OCI-LY7 (cell line): ENCODE measurements at regions of chr9 and their contacts with region 1.

Region 1: GRCh38 chr9:15606643-15607472 is 54.0 kb downstream of the CCDC171 start:
- DNase-seq: peak; percentile 70
- H3K4me3 ChIP-seq: no peak overlapping the region
- H3K27ac ChIP-seq: no peak overlapping the region
- H3K4me1 ChIP-seq: peaks cover 5% of the 10 kb centered on the region
- CTCF ChIP-seq: peak; percentile 95

Region 2: DNA sequence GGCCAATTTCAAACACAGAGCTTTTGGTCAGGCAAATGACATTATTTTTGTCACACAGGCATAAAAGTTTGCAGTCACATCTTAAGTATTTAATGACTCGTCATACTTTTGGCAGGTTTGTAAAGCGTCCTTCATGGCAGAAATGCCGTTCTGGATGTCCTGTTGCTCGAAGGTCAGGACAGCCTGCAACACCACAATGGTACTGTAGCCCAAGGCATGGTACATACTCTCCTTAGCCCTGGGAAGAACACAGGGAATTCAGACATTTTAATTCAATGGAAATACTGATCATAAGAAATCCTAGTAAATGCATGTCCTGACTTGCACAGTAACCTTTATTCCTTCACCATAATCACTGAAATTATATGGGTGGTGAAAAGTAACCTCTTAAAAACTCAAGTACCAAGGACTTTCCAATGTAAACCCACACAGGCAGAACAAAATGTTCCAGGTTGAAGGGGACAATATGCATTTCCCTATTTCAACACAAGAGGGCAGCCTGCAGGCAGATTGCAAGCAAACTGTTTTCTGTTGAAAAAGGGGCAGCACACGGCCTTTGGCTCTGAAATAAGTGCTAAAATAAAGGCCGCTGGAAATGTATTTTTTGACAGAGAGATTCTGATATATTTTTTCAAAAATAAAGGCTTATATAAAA is 395.6 kb before region 1 on chr9:
- CTCF ChIA-PET with region 1: no interaction called
- POLR2A ChIA-PET with region 1: no interaction called
- intact Hi-C with region 1: loop called (anchors 2 kb)
- DNase-seq: peak; percentile 65
- H3K4me3 ChIP-seq: no peak overlapping the region
- H3K27ac ChIP-seq: no peak overlapping the region
- H3K4me1 ChIP-seq: no peaks in the 10 kb centered on the region
- CTCF ChIP-seq: peak; percentile 96

Region 3: DNA sequence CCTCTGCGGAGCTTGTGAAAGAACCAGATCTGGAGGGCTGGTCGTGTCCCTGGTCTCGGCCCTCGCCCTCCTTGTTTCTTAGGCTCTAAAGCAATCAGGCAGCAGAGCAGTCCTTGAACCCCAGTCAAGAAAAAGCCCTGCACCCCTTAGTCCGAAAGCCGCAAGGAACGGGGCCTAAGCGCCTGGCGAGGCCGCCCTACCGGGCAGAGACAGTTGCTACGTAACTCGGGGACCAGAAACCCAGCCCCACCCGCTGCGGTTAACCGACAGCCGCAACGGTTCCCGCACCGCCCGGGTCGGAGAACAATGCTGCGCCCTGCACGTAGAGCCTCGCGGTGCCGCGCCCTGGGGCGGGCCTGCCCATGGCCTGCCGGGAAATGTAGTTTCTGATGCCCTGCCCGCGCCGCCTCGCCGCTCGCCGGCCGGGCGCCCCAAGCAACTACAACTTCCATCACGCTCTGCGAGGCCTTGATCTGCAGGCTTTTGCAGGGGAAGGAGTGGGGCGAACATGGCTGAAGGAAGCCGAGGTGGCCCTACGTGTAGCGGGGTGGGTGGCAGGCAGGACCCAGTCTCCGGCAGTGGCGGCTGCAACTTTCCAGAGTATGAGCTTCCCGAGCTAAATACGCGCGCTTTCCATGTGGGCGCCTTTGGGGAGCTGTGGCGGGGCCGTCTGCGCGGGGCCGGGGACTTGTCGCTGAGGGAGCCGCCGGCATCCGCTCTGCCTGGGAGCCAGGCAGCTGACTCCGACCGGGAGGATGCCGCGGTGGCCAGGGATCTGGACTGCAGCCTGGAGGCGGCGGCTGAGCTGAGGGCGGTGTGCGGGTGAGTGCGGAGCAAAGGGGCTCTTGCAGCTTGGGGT is 184.3 kb before region 1 on chr9 and contains the start of gene SNAPC3:
- CTCF ChIA-PET with region 1: no interaction called
- POLR2A ChIA-PET with region 1: no interaction called
- intact Hi-C with region 1: loop called (anchors 5 kb)
- DNase-seq: peak; percentile 95
- H3K4me3 ChIP-seq: peak within 1 kb of the TSS; percentile 90
- H3K27ac ChIP-seq: peak within 1 kb of the TSS; percentile 68
- H3K4me1 ChIP-seq: peaks cover 40% of the 10 kb centered on the region
- CTCF ChIP-seq: no peak
- total RNA-seq, gene SNAPC3: 54.2 and 66.1 TPM in 2 replicates

Region 4: GRCh38 chr9:15475923-15476536 is 130.8 kb before region 1 on chr9:
- CTCF ChIA-PET with region 1: no interaction called
- POLR2A ChIA-PET with region 1: no interaction called
- intact Hi-C with region 1: loop called (anchors 5 kb)
- DNase-seq: no peak
- H3K4me3 ChIP-seq: no peak overlapping the region
- H3K27ac ChIP-seq: no peak overlapping the region
- H3K4me1 ChIP-seq: peaks cover 17% of the 10 kb centered on the region
- CTCF ChIP-seq: no peak

Region 5: DNA sequence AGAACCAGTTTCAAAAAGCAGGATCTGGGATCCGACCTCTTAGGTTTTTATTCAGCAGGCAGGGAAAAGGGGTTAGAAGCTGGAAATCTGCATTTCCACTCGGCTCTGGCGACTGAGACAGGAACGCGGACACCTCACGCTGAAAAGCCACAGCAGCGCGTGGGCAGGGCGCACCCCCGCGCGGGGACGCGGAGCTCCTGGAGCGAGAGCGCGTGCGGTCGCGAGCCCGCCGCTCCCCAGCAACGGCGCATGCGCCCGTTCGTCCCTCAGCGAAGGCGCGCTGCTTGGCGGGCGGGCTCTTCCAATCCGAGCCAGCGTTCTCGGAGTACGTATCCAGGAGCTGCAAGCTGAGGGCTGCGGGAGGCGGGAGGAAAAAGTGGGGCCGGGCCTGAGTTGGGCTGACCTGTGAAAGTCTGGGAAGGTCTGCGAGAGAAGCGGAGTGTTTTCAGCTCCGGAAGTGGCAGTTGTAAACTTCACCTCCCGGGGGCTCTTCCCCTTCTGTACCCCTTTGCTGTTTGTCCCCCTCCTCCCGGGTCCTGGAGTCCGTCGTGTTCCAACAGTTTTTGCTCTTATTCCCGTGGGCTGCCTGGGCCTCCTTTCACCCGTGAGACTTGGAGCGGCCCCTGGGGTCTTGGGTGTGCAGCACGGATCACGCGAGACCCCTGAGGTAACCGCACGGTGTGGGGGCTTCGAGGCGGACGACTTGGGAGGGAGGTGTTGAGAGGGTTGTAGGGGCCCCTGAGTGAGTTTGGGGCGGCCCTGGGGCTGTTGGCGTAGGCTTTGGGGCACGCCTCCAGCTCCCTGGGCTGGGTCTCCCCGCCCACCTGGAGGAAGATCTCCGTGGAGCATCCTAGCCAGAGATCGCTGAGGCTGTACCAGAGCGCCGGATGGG is 54.0 kb before region 1 on chr9 and contains the start of gene CCDC171:
- CTCF ChIA-PET with region 1: no interaction called
- POLR2A ChIA-PET with region 1: interaction called, 4 read pairs
- intact Hi-C with region 1: loop called (anchors 1 kb)
- DNase-seq: peak; percentile 95
- H3K4me3 ChIP-seq: peak within 1 kb of the TSS; percentile 82
- H3K27ac ChIP-seq: peak within 1 kb of the TSS; percentile 87
- H3K4me1 ChIP-seq: peaks cover 41% of the 10 kb centered on the region
- CTCF ChIP-seq: no peak
- total RNA-seq, gene CCDC171: 10.4 and 11.6 TPM in 2 replicates

Region 6: GRCh38 chr9:16154521-16155078 is 547.7 kb after region 1 on chr9:
- CTCF ChIA-PET with region 1: no interaction called
- POLR2A ChIA-PET with region 1: no interaction called
- intact Hi-C with region 1: no loop called
- DNase-seq: peak; percentile 4
- H3K4me3 ChIP-seq: no peak overlapping the region
- H3K27ac ChIP-seq: no peak overlapping the region
- H3K4me1 ChIP-seq: no peaks in the 10 kb centered on the region
- CTCF ChIP-seq: 0 out of 2 replicates have a peak, but pooled peaks have one; percentile 28